Activated CD4-positive, alpha-beta T cell treated with anti-CD3 and anti-CD28 coated beads, Interleukin-2, amount 10 ng/mL, durations not matched to agents 7 days and 5 days (primary cell): ENCODE measurements at regions of chr5 and their contacts with region 1.

Region 1: DNA sequence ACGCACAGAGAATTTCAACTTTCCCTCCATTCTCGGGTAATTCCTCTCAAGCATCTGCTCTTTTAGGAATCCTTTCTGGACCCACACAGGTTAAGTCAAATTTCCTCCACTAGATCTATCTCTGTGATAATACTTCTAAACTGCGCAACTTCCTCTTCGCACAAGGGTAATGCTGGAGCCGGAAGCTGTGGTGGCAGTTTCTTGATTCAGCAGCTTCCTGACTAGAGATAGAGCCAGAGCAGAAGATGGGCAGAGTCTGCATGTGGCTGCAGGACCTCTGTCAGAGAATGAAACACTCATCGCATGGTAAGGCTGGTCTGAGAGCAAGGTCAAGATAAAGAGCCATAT is 11.1 kb upstream of the CDC42SE2 start:
- DNase-seq: peak; percentile 87
- H3K4me3 Mint-ChIP-seq: peak overlapping the region; percentile 88
- H3K27ac Mint-ChIP-seq: peak overlapping the region; percentile 96
- H3K4me1 Mint-ChIP-seq: peaks cover 76% of the 10 kb centered on the region
- H3K27me3 Mint-ChIP-seq: no peaks in the 10 kb centered on the region

Region 2: GRCh38 chr5:131239686-131240085 is 13.1 kb before region 1 on chr5:
- CTCF ChIA-PET with region 1: interaction called, 34 read pairs
- POLR2A ChIA-PET with region 1: no interaction called
- DNase-seq: no peak
- H3K4me3 Mint-ChIP-seq: no peak overlapping the region
- H3K27ac Mint-ChIP-seq: no peak overlapping the region
- H3K4me1 Mint-ChIP-seq: peaks cover 2% of the 10 kb centered on the region
- H3K27me3 Mint-ChIP-seq: no peaks in the 10 kb centered on the region

Region 3: GRCh38 chr5:131357739-131358561 is 105.2 kb after region 1 on chr5:
- CTCF ChIA-PET with region 1: no interaction called
- POLR2A ChIA-PET with region 1: no interaction called
- DNase-seq: peak; percentile 39
- H3K4me3 Mint-ChIP-seq: peak overlapping the region; percentile 1
- H3K27ac Mint-ChIP-seq: peak overlapping the region; percentile 66
- H3K4me1 Mint-ChIP-seq: peaks cover 66% of the 10 kb centered on the region
- H3K27me3 Mint-ChIP-seq: no peaks in the 10 kb centered on the region